ENCODE measurements at regions of chr11 and their contacts with region 1.

Region 1: GRCh38 chr11:61711498-61711897 is 31.3 kb downstream of the DAGLA start:
- DNase-seq: no peak
- ATAC-seq: no peak
- H3K4me3 ChIP-seq: no peak overlapping the region
- H3K27ac ChIP-seq: no peak overlapping the region
- H3K4me1 ChIP-seq: peaks cover 7% of the 10 kb centered on the region
- CTCF ChIP-seq: no peak
- EP300 ChIP-seq: no peak
- POLR2A ChIP-seq: no peak
- RAD21 ChIP-seq: no peak

Region 2: GRCh38 chr11:61725781-61726231 is 14.3 kb after region 1 on chr11:
- CTCF ChIA-PET with region 1: interaction called, 12 read pairs
- POLR2A ChIA-PET with region 1: no interaction called
- DNase-seq: no peak
- ATAC-seq: no peak
- H3K4me3 ChIP-seq: no peak overlapping the region
- H3K27ac ChIP-seq: no peak overlapping the region
- H3K4me1 ChIP-seq: peaks cover 27% of the 10 kb centered on the region
- CTCF ChIP-seq: no peak
- EP300 ChIP-seq: no peak
- POLR2A ChIP-seq: no peak
- RAD21 ChIP-seq: no peak

Measured in A549 (cell line).